Endothelial cell of umbilical vein (primary cell): ENCODE measurements at regions of chr5 and their contacts with region 1.

Region 1: GRCh38 chr5:151164686-151165392 is 7.3 kb upstream of the ANXA6 start:
- DNase-seq: peak; percentile 91
- H3K4me3 ChIP-seq: no peak overlapping the region
- H3K27ac ChIP-seq: no peak overlapping the region
- H3K4me1 ChIP-seq: peaks cover 8% of the 10 kb centered on the region
- H3K27me3 ChIP-seq: peaks cover 0 to 1% of the 10 kb centered on the region in 2 experiments
- CTCF ChIP-seq: peak; percentile 79 to 90
- POLR2A ChIP-seq: no peak

Region 2: DNA sequence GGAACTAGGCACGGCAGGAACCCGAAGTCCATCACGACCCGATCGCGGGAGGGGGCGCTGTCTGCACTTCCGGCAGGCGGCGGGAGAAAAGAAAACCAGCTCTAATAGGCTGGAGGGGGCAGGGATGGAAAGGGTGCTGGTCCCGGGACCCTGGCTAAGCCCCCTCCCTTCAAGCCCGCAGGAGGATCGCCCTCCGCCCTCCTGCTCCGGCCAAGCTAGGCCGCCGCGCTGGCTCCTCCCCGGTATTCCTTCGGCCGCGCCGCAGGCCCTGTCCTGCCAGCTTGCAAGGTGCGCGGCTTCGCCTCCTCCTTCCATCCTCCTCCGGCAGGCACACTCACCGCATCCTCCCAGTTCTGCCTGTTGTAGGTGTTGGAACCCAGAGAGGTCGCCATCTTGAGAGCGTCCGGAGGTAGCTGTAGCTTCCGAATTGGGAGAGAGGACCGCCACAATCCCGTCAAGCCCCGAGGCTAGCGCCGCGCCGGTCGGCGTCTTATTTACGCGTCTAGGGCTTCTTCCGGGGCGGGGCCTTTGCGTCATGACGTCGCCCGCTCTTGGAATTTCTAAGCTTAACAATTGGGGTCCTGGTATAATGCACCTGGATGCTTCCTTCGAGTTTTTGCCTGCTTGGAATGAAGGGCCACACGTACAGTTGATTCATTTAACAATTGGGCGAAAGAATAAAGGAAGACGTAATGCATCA is 464.1 kb before region 1 on chr5 and contains the start of gene RBM22:
- CTCF ChIA-PET with region 1: interaction called, 4 read pairs
- POLR2A ChIA-PET with region 1: no interaction called
- dilution Hi-C with region 1: no loop called
- intact Hi-C with region 1: loop called (anchors 2 kb)
- DNase-seq: peak; percentile 92
- H3K4me3 ChIP-seq: peak within 1 kb of the TSS; percentile 45 to 98 (median 69)
- H3K27ac ChIP-seq: peak within 1 kb of the TSS; percentile 73
- H3K4me1 ChIP-seq: peaks cover 13% of the 10 kb centered on the region
- H3K27me3 ChIP-seq: peaks cover 3 to 6% of the 10 kb centered on the region in 2 experiments
- CTCF ChIP-seq: peak; percentile 40 to 78
- POLR2A ChIP-seq: peak; percentile 93
- total RNA-seq, gene RBM22: 44.4 and 51.2 TPM in 2 replicates

Region 3: GRCh38 chr5:151002250-151002649 is 162.6 kb before region 1 on chr5:
- CTCF ChIA-PET with region 1: interaction called, 54 read pairs
- POLR2A ChIA-PET with region 1: no interaction called
- dilution Hi-C with region 1: no loop called
- intact Hi-C with region 1: loop called (anchors 1 kb)
- DNase-seq: peak; percentile 55
- H3K4me3 ChIP-seq: no peak overlapping the region
- H3K27ac ChIP-seq: no peak overlapping the region
- H3K4me1 ChIP-seq: no peaks in the 10 kb centered on the region
- H3K27me3 ChIP-seq: peaks cover 0 to 4% of the 10 kb centered on the region in 2 experiments
- CTCF ChIP-seq: peak in 1 of 2 donors; percentile 36
- POLR2A ChIP-seq: no peak

Region 4: GRCh38 chr5:151141535-151141934 is 23.3 kb before region 1 on chr5:
- CTCF ChIA-PET with region 1: interaction called, 16 read pairs
- POLR2A ChIA-PET with region 1: no interaction called
- dilution Hi-C with region 1: no loop called
- intact Hi-C with region 1: no loop called
- DNase-seq: no peak
- H3K4me3 ChIP-seq: no peak overlapping the region
- H3K27ac ChIP-seq: no peak overlapping the region
- H3K4me1 ChIP-seq: peaks cover 6% of the 10 kb centered on the region
- H3K27me3 ChIP-seq: no peaks in the 10 kb centered on the region
- CTCF ChIP-seq: no peak
- POLR2A ChIP-seq: no peak

Region 5: DNA sequence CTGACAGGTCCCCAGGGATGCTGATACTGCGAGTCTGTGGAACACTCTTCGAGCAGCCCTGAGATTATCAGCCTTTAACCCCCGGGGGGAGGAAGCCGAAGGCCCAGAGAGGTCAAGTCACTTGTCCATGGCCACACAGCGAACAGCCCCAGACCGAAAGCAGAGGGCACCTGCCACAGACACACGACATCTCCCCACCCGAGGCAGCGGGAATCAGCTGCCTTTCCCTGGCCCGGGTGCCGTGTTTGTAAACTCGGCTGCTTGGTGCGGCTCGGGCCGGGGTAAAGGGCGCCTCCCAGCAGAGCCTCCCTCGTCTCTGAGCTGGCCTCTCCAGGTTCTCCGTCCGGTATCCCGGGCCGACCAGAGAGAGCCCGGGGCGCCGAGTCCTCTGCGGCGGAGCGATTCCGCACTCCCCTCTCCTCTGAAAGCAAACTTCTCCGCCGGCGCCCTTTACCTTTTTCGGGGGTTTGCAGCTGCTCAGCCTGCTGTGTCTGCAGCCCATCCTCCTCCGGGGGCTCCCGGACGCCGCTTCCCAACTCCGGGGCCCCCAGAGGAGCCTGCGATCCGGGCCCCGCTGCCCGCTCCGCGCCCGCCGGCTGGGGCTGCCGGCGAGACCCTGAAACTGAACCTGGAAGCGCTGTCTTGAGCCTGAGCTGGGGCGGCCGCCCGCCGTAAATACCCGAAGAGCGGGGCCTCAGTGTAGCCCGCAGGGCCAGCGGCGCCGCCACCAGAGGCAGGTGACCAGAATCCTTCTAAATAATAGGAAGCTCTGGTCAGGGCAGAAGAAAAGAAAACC is 58.8 kb after region 1 on chr5 and contains the start of gene CCDC69:
- CTCF ChIA-PET with region 1: interaction called, 11 read pairs
- POLR2A ChIA-PET with region 1: no interaction called
- dilution Hi-C with region 1: no loop called
- intact Hi-C with region 1: no loop called
- DNase-seq: peak; percentile 82
- H3K4me3 ChIP-seq: peak within 1 kb of the TSS; percentile 57 to 91 (median 70)
- H3K27ac ChIP-seq: no peak within 1 kb of the TSS
- H3K4me1 ChIP-seq: peaks cover 6% of the 10 kb centered on the region
- H3K27me3 ChIP-seq: no peaks in the 10 kb centered on the region
- CTCF ChIP-seq: peak in 1 of 2 donors; percentile 44
- POLR2A ChIP-seq: peak; percentile 60
- total RNA-seq, gene CCDC69: 4.3 and 4.5 TPM in 2 replicates

Region 6: GRCh38 chr5:151315998-151316597 is 151.3 kb after region 1 on chr5:
- CTCF ChIA-PET with region 1: interaction called, 7 read pairs
- POLR2A ChIA-PET with region 1: no interaction called
- dilution Hi-C with region 1: no loop called
- intact Hi-C with region 1: loop called (anchors 10 kb)
- DNase-seq: peak; percentile 73
- H3K4me3 ChIP-seq: no peak overlapping the region
- H3K27ac ChIP-seq: no peak overlapping the region
- H3K4me1 ChIP-seq: no peaks in the 10 kb centered on the region
- H3K27me3 ChIP-seq: no peaks in the 10 kb centered on the region
- CTCF ChIP-seq: peak; percentile 88 to 90
- POLR2A ChIP-seq: no peak

Region 7: DNA sequence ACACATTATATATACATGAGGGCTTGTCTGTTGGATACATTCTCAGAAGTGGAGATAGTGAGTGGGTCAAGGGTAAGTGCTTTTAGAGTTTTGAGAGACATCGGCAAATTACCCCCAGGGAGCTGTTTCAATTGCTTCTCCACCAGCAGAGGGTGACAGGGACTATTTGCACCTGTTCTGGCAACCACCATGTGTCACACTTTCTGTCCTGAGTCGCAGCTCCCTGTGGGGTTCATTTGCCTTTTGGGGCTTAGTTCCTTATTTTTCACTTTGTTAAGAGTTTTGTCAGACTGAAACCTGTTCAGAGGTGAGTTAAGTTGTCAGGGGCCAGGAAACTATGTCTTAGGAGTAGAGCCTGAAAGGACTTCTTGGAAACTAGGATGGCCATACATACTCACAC is 262.4 kb after region 1 on chr5:
- CTCF ChIA-PET with region 1: no interaction called
- POLR2A ChIA-PET with region 1: no interaction called
- dilution Hi-C with region 1: no loop called
- intact Hi-C with region 1: no loop called
- DNase-seq: no peak
- H3K4me3 ChIP-seq: no peak overlapping the region
- H3K27ac ChIP-seq: no peak overlapping the region
- H3K4me1 ChIP-seq: no peaks in the 10 kb centered on the region
- H3K27me3 ChIP-seq: peaks cover 0 to 2% of the 10 kb centered on the region in 2 experiments
- CTCF ChIP-seq: no peak
- POLR2A ChIP-seq: no peak